HepG2 (cell line): ENCODE measurements at regions of chr15 and their contacts with region 1.

Region 1: DNA sequence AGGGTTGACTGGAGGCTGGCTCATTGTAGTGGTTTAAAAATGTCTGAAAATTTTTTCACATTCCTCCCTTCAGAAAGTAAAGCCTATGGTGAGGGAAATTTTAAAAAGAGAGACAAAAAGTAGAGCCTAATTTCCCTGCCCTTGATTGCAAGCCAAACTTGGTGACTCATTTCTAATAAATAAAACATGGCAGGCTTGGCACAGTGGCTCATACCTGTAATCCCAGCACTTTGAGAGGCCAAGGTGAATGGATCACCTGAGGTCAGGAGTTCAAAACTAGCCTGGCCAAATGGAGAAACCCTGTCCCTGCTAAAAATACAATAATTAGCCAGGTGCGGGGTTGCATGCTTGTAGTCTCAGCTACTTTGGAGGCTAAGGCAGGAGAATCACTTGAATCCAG is 18.9 kb upstream of the ARRDC4 start:
- DNase-seq: no peak
- ATAC-seq: no peak
- H3K4me3 ChIP-seq: no peak overlapping the region
- H3K27ac ChIP-seq: no peak overlapping the region
- H3K4me1 ChIP-seq: peaks cover 10% of the 10 kb centered on the region
- H3K27me3 ChIP-seq: no peaks in the 10 kb centered on the region; a peak in 2 of 5 replicates
- CTCF ChIP-seq: no peak
- EP300 ChIP-seq: no peak
- POLR2A ChIP-seq: no peak
- RAD21 ChIP-seq: no peak

Region 2: GRCh38 chr15:97978401-97979139 is 37.0 kb after region 1 on chr15:
- CTCF ChIA-PET with region 1: no interaction called
- POLR2A ChIA-PET with region 1: no interaction called
- in situ Hi-C with region 1: no loop called
- intact Hi-C with region 1: loop called (anchors 2 kb)
- DNase-seq: peak; percentile 58
- ATAC-seq: peak; percentile 98
- H3K4me3 ChIP-seq: no peak overlapping the region
- H3K27ac ChIP-seq: no peak overlapping the region
- H3K4me1 ChIP-seq: peaks cover 16% of the 10 kb centered on the region
- H3K27me3 ChIP-seq: no peaks in the 10 kb centered on the region
- CTCF ChIP-seq: no peak
- EP300 ChIP-seq: no peak
- POLR2A ChIP-seq: no peak
- RAD21 ChIP-seq: no peak